Activated CD8-positive, alpha-beta T cell treated with anti-CD3 and anti-CD28 coated beads for 36 hours (primary cell): ENCODE measurements at regions of chr22 and their contacts with region 1.

Region 1: GRCh38 chr22:16961477-16962186 is 46.4 kb downstream of the GAB4 start:
- DNase-seq: no peak
- ATAC-seq: no peak
- H3K4me3 Mint-ChIP-seq: no peak overlapping the region
- H3K27ac Mint-ChIP-seq: no peak overlapping the region
- H3K4me1 Mint-ChIP-seq: no peaks in the 10 kb centered on the region
- H3K27me3 Mint-ChIP-seq: no peaks in the 10 kb centered on the region
- CTCF ChIP-seq: no peak

Region 2: DNA sequence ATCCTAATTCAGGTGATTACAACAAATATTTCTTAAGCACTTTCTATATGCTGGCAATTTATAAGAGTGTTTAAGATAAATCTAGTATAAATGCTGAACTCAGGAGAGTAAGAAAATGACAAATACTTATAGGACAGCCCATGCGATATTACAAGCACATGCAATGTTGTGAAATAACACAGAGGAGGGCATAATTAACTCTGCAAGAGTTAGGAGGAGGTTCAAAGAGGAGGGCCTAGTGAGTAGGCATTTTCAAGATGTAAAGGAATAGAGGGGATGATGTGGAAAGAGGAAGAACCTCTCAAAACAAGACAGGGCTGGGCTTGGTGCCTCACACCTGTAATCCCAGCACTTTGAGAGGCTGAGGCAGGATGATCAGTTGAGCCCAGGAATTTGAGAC is 86.0 kb after region 1 on chr22:
- CTCF ChIA-PET with region 1: no interaction called
- POLR2A ChIA-PET with region 1: no interaction called
- intact Hi-C with region 1: loop called (anchors 10 kb)
- DNase-seq: no peak
- ATAC-seq: no peak
- H3K4me3 Mint-ChIP-seq: no peak overlapping the region
- H3K27ac Mint-ChIP-seq: no peak overlapping the region
- H3K4me1 Mint-ChIP-seq: peaks cover 4% of the 10 kb centered on the region
- H3K27me3 Mint-ChIP-seq: no peaks in the 10 kb centered on the region
- CTCF ChIP-seq: no peak

Region 3: GRCh38 chr22:17098379-17098819 is 136.8 kb after region 1 on chr22:
- CTCF ChIA-PET with region 1: no interaction called
- POLR2A ChIA-PET with region 1: no interaction called
- intact Hi-C with region 1: no loop called
- DNase-seq: peak; percentile 39
- ATAC-seq: peak; percentile 64
- H3K4me3 Mint-ChIP-seq: no peak overlapping the region
- H3K27ac Mint-ChIP-seq: peak overlapping the region; percentile 26
- H3K4me1 Mint-ChIP-seq: peaks cover 82% of the 10 kb centered on the region
- H3K27me3 Mint-ChIP-seq: no peaks in the 10 kb centered on the region
- CTCF ChIP-seq: no peak